WTC11 (cell line): ENCODE measurements at regions of chr2 and their contacts with region 1.

Region 1: DNA sequence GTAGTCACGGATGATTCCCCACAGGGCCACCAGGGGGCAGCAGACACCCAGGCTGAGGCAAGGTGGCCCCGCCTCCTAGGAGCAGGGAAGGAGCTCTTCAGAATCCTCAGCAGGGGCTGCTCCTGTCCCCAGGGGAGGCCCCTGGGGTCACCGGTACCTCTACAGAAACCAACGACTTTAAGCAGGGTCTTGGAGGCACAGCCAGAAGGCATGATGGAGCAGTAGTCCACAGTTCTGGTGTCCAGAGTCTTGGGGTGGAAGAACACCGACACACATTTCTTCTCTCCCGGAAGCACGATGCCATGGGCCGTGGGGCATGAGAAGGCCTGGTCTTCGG is 11.5 kb downstream of the CFAP65 start:
- DNase-seq: peak; percentile 89
- ATAC-seq: peak; percentile 96
- H3K4me3 Mint-ChIP-seq: no peak overlapping the region
- H3K27ac Mint-ChIP-seq: 0 out of 2 replicates have a peak overlapping the region, but pooled peaks have one; percentile 26
- H3K4me1 Mint-ChIP-seq: peaks cover 3% of the 10 kb centered on the region
- H3K27me3 Mint-ChIP-seq: no peaks in the 10 kb centered on the region; the same call in 1 of the 2 replicates
- CTCF ChIP-seq: peak; percentile 94

Region 2: DNA sequence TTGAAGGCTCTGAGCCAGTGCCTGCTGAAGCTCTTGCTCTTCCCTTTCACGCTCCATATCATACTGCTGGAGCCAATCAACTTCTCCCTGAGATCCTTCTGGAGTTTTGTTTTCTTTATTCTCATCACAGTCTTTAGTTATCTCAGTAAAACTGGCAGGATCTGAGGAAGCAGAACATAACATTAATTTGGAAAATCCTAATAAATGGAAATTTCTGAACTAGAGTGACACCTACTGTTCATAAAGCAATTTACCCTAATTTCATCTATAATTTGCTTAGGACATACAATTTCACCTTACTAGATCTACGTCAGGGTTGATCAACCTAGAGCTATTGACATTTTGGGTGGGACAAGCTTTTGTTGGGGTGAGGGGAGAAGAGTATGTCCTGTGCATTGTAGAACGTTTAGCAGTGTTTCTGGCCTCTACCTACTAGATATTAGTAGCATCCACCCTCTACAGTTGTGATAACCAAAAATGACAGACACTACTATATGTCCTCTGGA is 563.7 kb before region 1 on chr2:
- CTCF ChIA-PET with region 1: no interaction called
- POLR2A ChIA-PET with region 1: no interaction called
- DNase-seq: no peak
- ATAC-seq: no peak
- H3K4me3 Mint-ChIP-seq: no peak overlapping the region
- H3K27ac Mint-ChIP-seq: no peak overlapping the region
- H3K4me1 Mint-ChIP-seq: no peaks in the 10 kb centered on the region
- H3K27me3 Mint-ChIP-seq: no peaks in the 10 kb centered on the region
- CTCF ChIP-seq: no peak

Region 3: GRCh38 chr2:218995972-218996711 is 33.7 kb before region 1 on chr2:
- CTCF ChIA-PET with region 1: interaction called, 70 read pairs
- POLR2A ChIA-PET with region 1: no interaction called
- DNase-seq: peak; percentile 93
- ATAC-seq: peak; percentile 49
- H3K4me3 Mint-ChIP-seq: peak overlapping the region; percentile 60
- H3K27ac Mint-ChIP-seq: no peak overlapping the region
- H3K4me1 Mint-ChIP-seq: peaks cover 26% of the 10 kb centered on the region
- H3K27me3 Mint-ChIP-seq: peaks cover 100% of the 10 kb centered on the region
- CTCF ChIP-seq: peak; percentile 90

Region 4: DNA sequence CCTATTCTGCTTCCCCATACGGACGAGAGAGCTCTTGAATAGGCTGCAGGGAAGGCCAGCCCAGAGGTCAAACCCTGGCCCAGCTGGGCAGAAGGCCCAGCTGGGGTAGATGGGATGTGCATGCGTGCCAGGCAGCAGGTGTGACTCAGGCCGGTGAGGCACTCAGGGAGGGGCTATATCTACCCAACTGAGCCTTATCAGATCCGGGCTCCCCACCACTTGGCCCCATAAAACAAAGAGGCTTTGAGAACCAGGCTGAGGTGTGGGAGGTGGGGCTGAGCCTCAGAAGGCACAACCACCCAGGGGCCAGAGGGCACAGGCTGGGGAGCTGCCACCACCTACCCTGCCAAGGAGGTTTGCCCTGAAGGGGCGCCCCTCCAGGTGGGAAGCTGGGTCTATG is 19.5 kb after region 1 on chr2:
- CTCF ChIA-PET with region 1: interaction called, 34 read pairs
- POLR2A ChIA-PET with region 1: no interaction called
- DNase-seq: no peak
- ATAC-seq: no peak
- H3K4me3 Mint-ChIP-seq: no peak overlapping the region
- H3K27ac Mint-ChIP-seq: no peak overlapping the region
- H3K4me1 Mint-ChIP-seq: no peaks in the 10 kb centered on the region
- H3K27me3 Mint-ChIP-seq: peaks cover 65% of the 10 kb centered on the region
- CTCF ChIP-seq: no peak

Region 5: DNA sequence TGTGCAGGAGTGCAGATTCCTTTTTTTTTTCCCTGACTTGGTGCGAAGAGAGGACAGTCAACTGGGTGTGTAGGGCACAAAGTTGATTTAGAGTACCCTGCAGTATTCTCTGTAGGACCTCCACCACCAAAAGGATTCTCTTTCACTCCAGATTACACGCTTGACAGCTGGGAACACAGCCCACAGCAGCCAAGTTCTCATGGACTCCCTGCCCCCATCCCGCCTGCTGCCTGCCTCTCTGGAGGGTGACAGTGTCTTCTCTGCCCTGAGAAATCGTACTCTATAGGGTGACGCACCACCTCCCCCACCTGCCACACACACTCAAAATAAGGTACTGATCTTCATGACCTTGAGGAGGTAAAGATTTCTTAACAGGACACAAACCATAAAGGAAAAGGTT is 57.6 kb after region 1 on chr2:
- CTCF ChIA-PET with region 1: interaction called, 10 read pairs
- POLR2A ChIA-PET with region 1: no interaction called
- DNase-seq: no peak
- ATAC-seq: no peak; the same call in 1 of the 2 replicates
- H3K4me3 Mint-ChIP-seq: no peak overlapping the region
- H3K27ac Mint-ChIP-seq: no peak overlapping the region
- H3K4me1 Mint-ChIP-seq: peaks cover 19% of the 10 kb centered on the region
- H3K27me3 Mint-ChIP-seq: no peaks in the 10 kb centered on the region
- CTCF ChIP-seq: no peak

Region 6: DNA sequence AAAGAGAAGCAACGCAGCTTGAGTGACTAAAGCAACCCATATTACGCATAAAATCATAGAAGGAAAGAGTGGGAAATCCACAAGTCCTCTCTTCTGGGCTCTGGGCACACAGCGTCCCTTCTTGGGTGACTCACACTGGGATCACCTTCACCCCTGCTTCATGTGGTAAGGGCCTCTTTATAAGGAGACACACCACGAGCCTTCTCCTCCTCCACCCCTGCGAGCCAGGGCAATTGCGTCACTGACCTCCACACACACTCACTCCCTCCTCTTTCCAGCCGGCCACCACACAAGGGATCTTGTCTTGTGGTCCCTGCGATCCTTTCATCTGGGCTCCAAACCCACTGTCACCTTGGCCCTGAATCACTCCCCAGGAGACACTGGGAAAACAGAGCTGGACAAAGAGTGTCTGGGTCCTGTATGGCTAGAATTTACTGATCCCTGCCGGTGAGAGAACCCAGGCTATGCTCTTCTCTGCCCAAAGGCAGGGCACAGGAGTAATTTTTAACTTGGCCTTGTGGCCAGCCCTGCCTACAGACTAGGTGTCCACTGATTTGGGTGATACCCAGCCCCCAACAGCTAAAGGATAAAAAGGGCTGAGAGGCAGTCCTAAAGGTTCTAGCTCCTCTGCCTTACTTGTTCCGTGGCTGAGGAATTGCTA is 95.6 kb after region 1 on chr2:
- CTCF ChIA-PET with region 1: interaction called, 41 read pairs
- POLR2A ChIA-PET with region 1: no interaction called
- DNase-seq: no peak
- ATAC-seq: no peak
- H3K4me3 Mint-ChIP-seq: no peak overlapping the region
- H3K27ac Mint-ChIP-seq: no peak overlapping the region
- H3K4me1 Mint-ChIP-seq: peaks cover 18% of the 10 kb centered on the region
- H3K27me3 Mint-ChIP-seq: no peaks in the 10 kb centered on the region
- CTCF ChIP-seq: no peak

Region 7: GRCh38 chr2:219294356-219295351 is 264.9 kb after region 1 on chr2:
- CTCF ChIA-PET with region 1: interaction called, 10 read pairs
- POLR2A ChIA-PET with region 1: no interaction called
- DNase-seq: peak; percentile 90
- ATAC-seq: peak; percentile 82
- H3K4me3 Mint-ChIP-seq: peak overlapping the region; percentile 88
- H3K27ac Mint-ChIP-seq: peak overlapping the region; percentile 7; the same call in 1 of the 2 replicates
- H3K4me1 Mint-ChIP-seq: peaks cover 21% of the 10 kb centered on the region
- H3K27me3 Mint-ChIP-seq: peaks cover 64% of the 10 kb centered on the region
- CTCF ChIP-seq: peak; percentile 96